K562 (cell line): ENCODE measurements at regions of chr17 and their contacts with region 1.

Region 1: GRCh38 chr17:31487648-31488263 is 96.3 kb downstream of the RAB11FIP4 start:
- DNase-seq: peak; percentile 94 to 100 (median 100)
- ATAC-seq: peak; percentile 96
- H3K4me3 ChIP-seq: peak overlapping the region; percentile 64
- H3K27ac ChIP-seq: peak overlapping the region; percentile 56; the same call in 2 of the 3 replicates
- H3K4me1 ChIP-seq: peaks cover 49 to 56% of the 10 kb centered on the region in 2 experiments
- H3K27me3 ChIP-seq: no peaks in the 10 kb centered on the region
- CTCF ChIP-seq: peak in 1 of 3 experiments; percentile 15; a peak in 1 of 6 replicates
- EP300 ChIP-seq: no peak
- POLR2A ChIP-seq: peak; percentile 88
- RAD21 ChIP-seq: no peak

Region 2: DNA sequence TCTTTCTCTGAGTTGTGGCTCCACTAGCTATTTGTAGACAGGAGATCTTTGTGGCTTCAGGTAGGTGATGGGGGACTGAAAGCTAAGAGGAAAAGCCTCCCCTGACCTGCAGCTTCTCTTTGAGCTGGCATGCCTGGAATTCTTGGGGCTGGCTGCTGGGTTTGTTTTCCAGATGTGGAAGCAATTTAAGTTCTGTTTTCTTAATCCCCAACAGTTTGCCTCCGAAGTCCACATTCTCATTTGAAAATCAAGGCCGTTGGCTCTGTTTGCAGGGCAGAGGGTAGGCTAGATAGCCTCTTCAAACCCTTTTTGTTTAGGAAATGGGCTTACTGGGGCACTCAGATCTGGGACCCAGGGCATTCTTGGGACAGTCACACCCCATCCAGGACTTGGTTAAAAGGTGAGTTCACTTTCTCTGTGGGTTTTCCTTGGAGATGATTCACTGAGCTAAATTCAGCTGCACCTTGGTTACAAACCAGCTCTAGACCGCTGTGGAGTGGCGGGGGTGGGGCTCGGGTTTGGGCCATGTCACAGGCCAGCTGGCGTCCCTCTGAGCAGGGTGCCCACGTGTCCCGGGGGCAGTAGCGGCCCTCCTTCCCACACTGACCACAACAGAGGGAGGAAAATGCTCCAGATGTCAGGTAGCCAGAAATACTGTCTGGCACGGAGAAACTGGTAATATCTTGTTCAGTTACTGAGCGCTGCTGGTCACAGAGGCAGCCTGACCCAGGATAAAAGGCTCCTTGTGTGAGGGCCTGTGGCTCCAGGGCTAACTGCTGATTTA is 12.2 kb after region 1 on chr17:
- CTCF ChIA-PET with region 1: no interaction called
- POLR2A ChIA-PET with region 1: interaction called, 18 read pairs
- in situ Hi-C with region 1: no loop called
- intact Hi-C with region 1: no loop called
- DNase-seq: peak in 1 of 4 experiments; percentile 44
- ATAC-seq: peak; percentile 28; the same call in 2 of the 3 replicates
- H3K4me3 ChIP-seq: no peak overlapping the region
- H3K27ac ChIP-seq: no peak overlapping the region
- H3K4me1 ChIP-seq: peaks cover 29 to 33% of the 10 kb centered on the region in 2 experiments
- H3K27me3 ChIP-seq: no peaks in the 10 kb centered on the region
- CTCF ChIP-seq: no peak
- EP300 ChIP-seq: no peak
- POLR2A ChIP-seq: no peak
- RAD21 ChIP-seq: no peak